K562 (cell line): ENCODE measurements at regions of chr17 and their contacts with region 1.

Region 1: GRCh38 chr17:44360826-44361225 is 2.8 kb downstream of the FAM171A2 start:
- DNase-seq: peak in 3 of 4 experiments; percentile 38 to 65 (median 58)
- ATAC-seq: no peak
- H3K4me3 ChIP-seq: no peak overlapping the region
- H3K27ac ChIP-seq: no peak overlapping the region
- H3K4me1 ChIP-seq: peaks cover 0 to 35% of the 10 kb centered on the region in 2 experiments; a peak in 3 of 5 replicates
- H3K27me3 ChIP-seq: no peaks in the 10 kb centered on the region
- CTCF ChIP-seq: no peak
- EP300 ChIP-seq: no peak
- POLR2A ChIP-seq: no peak
- RAD21 ChIP-seq: no peak

Region 2: GRCh38 chr17:44350733-44351226 is 10.0 kb before region 1 on chr17:
- CTCF ChIA-PET with region 1: no interaction called
- POLR2A ChIA-PET with region 1: interaction called, 15 read pairs
- in situ Hi-C with region 1: no loop called
- intact Hi-C with region 1: no loop called
- DNase-seq: peak; percentile 77 to 85 (median 80)
- ATAC-seq: peak; percentile 93
- H3K4me3 ChIP-seq: no peak overlapping the region
- H3K27ac ChIP-seq: no peak overlapping the region
- H3K4me1 ChIP-seq: peaks cover 3 to 46% of the 10 kb centered on the region in 2 experiments; a peak in 3 of 5 replicates
- H3K27me3 ChIP-seq: no peaks in the 10 kb centered on the region
- CTCF ChIP-seq: peak; percentile 82 to 87 (median 86)
- EP300 ChIP-seq: no peak
- POLR2A ChIP-seq: no peak
- RAD21 ChIP-seq: peak; percentile 48 to 75